K562 (cell line): ENCODE measurements at regions of chrX and their contacts with region 1.

Region 1: DNA sequence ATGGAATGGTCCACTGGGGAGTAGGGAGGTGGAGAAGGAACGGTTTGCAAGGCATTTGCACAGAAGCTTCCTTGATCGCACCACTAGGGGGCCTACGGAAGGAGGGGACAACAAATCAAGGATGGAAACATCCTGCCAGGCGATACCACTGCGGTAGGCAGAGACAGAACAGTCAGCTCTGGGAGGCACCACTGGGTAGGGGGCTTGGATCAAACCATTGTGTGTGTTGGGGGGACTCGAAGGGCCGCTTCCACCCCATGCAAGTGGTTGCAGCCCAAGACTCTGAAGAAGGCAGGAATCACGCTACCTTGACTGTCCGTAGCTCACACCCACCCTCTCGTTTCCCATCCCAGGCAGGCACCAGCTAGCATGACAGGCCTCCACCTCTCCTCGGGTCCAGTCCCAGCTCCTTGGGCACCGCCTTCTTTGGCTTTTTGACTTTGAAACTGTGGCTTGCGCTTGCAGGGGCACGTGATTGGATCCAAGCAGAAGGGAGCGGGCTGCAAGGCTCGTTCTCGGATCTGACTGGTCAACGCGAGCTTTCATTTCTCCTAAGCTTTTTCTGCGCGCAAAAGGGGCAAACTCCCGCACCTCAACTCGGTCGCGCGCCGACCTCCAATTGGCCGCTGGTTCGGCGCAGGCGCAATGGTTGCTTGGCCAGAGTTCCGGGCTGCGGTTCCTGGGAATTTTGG is 28.4 kb downstream of the GAGE1 start:
- DNase-seq: peak; percentile 65 to 68 (median 67)
- ATAC-seq: peak; percentile 90
- H3K4me3 ChIP-seq: peak overlapping the region; percentile 27
- H3K27ac ChIP-seq: no peak overlapping the region
- H3K4me1 ChIP-seq: peaks cover 0 to 6% of the 10 kb centered on the region in 2 experiments; a peak in 2 of 5 replicates
- H3K27me3 ChIP-seq: peaks cover 0 to 2% of the 10 kb centered on the region in 2 experiments; a peak in 1 of 5 replicates
- CTCF ChIP-seq: peak; percentile 61 to 72 (median 63)
- EP300 ChIP-seq: no peak
- POLR2A ChIP-seq: no peak
- RAD21 ChIP-seq: peak in 1 of 2 experiments; percentile 49; a peak in 2 of 4 replicates

Region 2: DNA sequence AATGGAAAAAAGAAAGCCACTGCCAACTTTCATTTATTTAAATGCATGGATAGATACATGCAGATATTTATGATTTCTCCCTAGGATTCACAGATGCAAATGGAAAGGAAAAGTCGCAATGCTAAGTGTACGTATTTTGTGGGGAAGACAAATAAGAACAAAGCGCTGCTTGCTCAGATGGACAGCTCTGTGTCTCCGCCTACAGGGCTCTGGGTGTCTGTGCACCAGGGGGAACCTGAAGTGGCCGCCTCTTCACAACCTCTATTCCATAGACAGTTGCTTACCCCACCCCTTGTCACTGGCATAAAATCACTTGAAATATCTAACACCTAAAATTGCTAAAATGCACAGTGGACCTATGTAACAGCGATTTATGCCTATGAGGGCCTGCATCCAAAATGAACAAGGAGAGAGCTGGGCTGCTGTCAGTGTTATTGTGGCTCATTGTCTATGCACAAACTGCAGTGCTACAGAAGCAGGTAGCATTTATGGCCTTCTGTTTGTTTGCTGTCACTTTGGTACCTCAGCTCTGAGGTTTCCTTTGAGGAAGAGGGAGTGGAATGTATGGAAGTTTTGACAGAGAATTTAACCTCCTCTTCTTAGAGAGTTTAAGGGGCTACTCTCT is 127.1 kb after region 1 on chrX:
- CTCF ChIA-PET with region 1: no interaction called
- POLR2A ChIA-PET with region 1: no interaction called
- in situ Hi-C with region 1: no loop called
- intact Hi-C with region 1: loop called (anchors 1 kb)
- DNase-seq: peak; percentile 39 to 59 (median 52)
- ATAC-seq: peak; percentile 93
- H3K4me3 ChIP-seq: no peak overlapping the region
- H3K27ac ChIP-seq: no peak overlapping the region
- H3K4me1 ChIP-seq: no peaks in the 10 kb centered on the region
- H3K27me3 ChIP-seq: peaks cover 0 to 8% of the 10 kb centered on the region in 2 experiments; a peak in 1 of 5 replicates
- CTCF ChIP-seq: peak; percentile 75 to 94 (median 84)
- EP300 ChIP-seq: no peak
- POLR2A ChIP-seq: no peak
- RAD21 ChIP-seq: peak; percentile 61 to 79; a peak in 3 of 4 replicates